ENCODE measurements at regions of chr12 and their contacts with region 1.

Region 1: GRCh38 chr12:59595883-59596540 is at the start of gene SLC16A7:
- DNase-seq: peak; percentile 67
- H3K4me3 Mint-ChIP-seq: peak within 1 kb of the TSS; percentile 96
- H3K27ac Mint-ChIP-seq: peak within 1 kb of the TSS; percentile 100
- H3K4me1 Mint-ChIP-seq: peaks cover 46% of the 10 kb centered on the region
- H3K27me3 Mint-ChIP-seq: no peaks in the 10 kb centered on the region
- total RNA-seq, gene SLC16A7: 38.7 and 40.0 TPM in 2 replicates

Region 2: DNA sequence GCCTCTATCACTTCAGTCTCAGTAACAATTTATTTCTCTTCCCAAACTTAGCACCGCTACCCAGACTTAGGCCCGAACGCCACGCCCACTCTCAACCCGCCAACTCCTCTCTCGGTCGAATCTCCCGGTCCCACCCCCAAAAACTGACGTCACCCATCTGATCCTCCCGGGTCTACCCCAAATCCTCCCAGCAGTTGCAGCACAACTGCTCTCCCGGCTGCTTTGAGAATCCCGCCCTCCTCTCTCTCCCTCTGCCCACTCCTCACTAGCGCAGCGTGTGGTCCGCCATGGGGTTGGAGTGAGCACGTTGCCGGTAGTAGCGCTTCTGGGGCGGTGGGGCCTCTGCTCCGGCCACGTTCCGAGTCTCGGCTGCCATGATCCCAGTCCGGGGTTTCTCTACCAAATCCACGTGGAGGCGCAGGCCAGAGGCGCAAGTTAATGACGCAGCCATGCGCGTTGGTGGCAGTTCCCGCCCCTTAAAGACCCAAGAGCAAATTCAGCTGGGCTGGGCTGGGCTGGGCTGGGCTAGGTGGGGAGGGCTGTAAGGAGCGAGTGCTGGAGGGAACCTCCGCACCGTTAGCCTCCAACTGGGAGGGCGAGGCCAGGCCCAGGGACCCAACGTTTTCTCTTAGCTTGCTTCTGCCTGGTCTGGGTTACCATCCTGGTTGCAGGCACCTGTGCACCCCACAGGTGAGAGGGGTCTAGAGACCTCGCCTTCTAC is 1824.1 kb before region 1 on chr12 and contains the start of gene METTL1:
- intact Hi-C with region 1: loop called (anchors 5 kb)
- DNase-seq: peak; percentile 90
- H3K4me3 Mint-ChIP-seq: peak within 1 kb of the TSS; percentile 93
- H3K27ac Mint-ChIP-seq: peak within 1 kb of the TSS; percentile 99
- H3K4me1 Mint-ChIP-seq: peaks cover 40% of the 10 kb centered on the region
- H3K27me3 Mint-ChIP-seq: no peaks in the 10 kb centered on the region
- total RNA-seq, gene METTL1: 89.7 and 90.0 TPM in 2 replicates

Region 3: GRCh38 chr12:58425481-58426392 is 1170.3 kb before region 1 on chr12:
- intact Hi-C with region 1: loop called (anchors 2 kb)
- DNase-seq: peak; percentile 9
- H3K4me3 Mint-ChIP-seq: peak overlapping the region; percentile 58
- H3K27ac Mint-ChIP-seq: peak overlapping the region; percentile 87
- H3K4me1 Mint-ChIP-seq: peaks cover 43% of the 10 kb centered on the region
- H3K27me3 Mint-ChIP-seq: peaks cover 28% of the 10 kb centered on the region

Region 4: GRCh38 chr12:59298296-59298695 is 297.7 kb before region 1 on chr12:
- intact Hi-C with region 1: no loop called
- DNase-seq: no peak
- H3K4me3 Mint-ChIP-seq: no peak overlapping the region
- H3K27ac Mint-ChIP-seq: no peak overlapping the region
- H3K4me1 Mint-ChIP-seq: no peaks in the 10 kb centered on the region
- H3K27me3 Mint-ChIP-seq: peaks cover 4% of the 10 kb centered on the region

Region 5: GRCh38 chr12:59403259-59403932 is 192.6 kb before region 1 on chr12:
- intact Hi-C with region 1: loop called (anchors 1 kb)
- DNase-seq: peak; percentile 1
- H3K4me3 Mint-ChIP-seq: no peak overlapping the region
- H3K27ac Mint-ChIP-seq: no peak overlapping the region
- H3K4me1 Mint-ChIP-seq: no peaks in the 10 kb centered on the region
- H3K27me3 Mint-ChIP-seq: no peaks in the 10 kb centered on the region

Region 6: GRCh38 chr12:59808317-59808910 is 212.4 kb after region 1 on chr12:
- intact Hi-C with region 1: loop called (anchors 2 kb)
- DNase-seq: no peak
- H3K4me3 Mint-ChIP-seq: no peak overlapping the region
- H3K27ac Mint-ChIP-seq: no peak overlapping the region
- H3K4me1 Mint-ChIP-seq: no peaks in the 10 kb centered on the region
- H3K27me3 Mint-ChIP-seq: peaks cover 5% of the 10 kb centered on the region

Measured in activated T-helper 1 cell treated with anti-CD3 and anti-CD28 coated beads, Interleukin-12 subunit alpha, Interleukin-12 subunit beta, Interleukin-2, Interleukin-4 antibody, amounts not matched to agents 30 ng/mL and 10 ng/mL and 1 ng/mL, durations not matched to agents 14 hours and 24 hours and 36 hours (primary cell).